Panc1 (cell line): ENCODE measurements at regions of chr3 and their contacts with region 1.

Region 1: DNA sequence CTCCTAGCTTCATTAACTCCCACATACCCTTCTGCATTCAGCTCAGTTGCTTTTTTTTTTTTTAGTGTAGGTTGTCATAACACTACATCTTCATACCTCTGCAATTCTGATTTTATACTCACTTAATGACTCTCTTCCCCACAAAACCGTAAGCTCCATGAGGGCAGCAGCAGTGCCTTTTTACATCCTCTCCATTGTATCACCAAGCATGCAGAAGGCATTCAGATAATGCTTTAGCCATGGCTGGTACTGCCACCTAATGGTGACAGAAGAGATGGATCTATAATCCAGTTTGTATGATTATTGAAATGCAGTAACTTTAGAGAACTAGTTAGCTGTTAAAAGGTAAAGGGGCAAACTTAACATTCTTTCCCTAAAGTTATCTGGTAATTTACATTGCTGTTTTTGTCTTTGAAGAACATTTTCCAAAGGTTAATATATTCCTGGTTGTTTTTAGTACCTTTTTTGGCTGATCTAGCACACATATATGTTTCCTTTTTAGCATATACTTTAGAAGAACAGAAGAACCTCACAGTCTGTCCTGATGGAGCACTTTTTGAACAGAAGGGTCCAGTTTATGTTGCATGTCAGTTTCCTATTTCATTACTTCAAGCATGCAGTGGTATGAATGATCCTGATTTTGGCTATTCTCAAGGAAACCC is 36.8 kb downstream of the ATP1B3 start:
- DNase-seq: no peak
- ATAC-seq: peak; percentile 92
- H3K4me3 ChIP-seq: no peak overlapping the region
- H3K27ac ChIP-seq: no peak overlapping the region
- H3K4me1 ChIP-seq: no peaks in the 10 kb centered on the region
- H3K27me3 ChIP-seq: no peaks in the 10 kb centered on the region
- CTCF ChIP-seq: peak; percentile 85

Region 2: GRCh38 chr3:141643391-141643790 is 269.9 kb before region 1 on chr3:
- CTCF ChIA-PET with region 1: no interaction called
- POLR2A ChIA-PET with region 1: interaction called, 14 read pairs
- in situ Hi-C with region 1: no loop called
- intact Hi-C with region 1: no loop called
- DNase-seq: no peak
- ATAC-seq: no peak
- H3K4me3 ChIP-seq: no peak overlapping the region
- H3K27ac ChIP-seq: no peak overlapping the region
- H3K4me1 ChIP-seq: no peaks in the 10 kb centered on the region
- H3K27me3 ChIP-seq: no peaks in the 10 kb centered on the region
- CTCF ChIP-seq: no peak

Region 3: GRCh38 chr3:141926929-141927328 is 13.6 kb after region 1 on chr3:
- CTCF ChIA-PET with region 1: no interaction called
- POLR2A ChIA-PET with region 1: interaction called, 10 read pairs
- in situ Hi-C with region 1: no loop called
- intact Hi-C with region 1: no loop called
- DNase-seq: no peak
- ATAC-seq: no peak
- H3K4me3 ChIP-seq: no peak overlapping the region
- H3K27ac ChIP-seq: no peak overlapping the region
- H3K4me1 ChIP-seq: no peaks in the 10 kb centered on the region
- H3K27me3 ChIP-seq: no peaks in the 10 kb centered on the region
- CTCF ChIP-seq: no peak